ENCODE measurements at regions of chr17 and their contacts with region 1.

Region 1: GRCh38 chr17:45135192-45135977 is at the start of gene ACBD4:
- DNase-seq: peak; percentile 95 to 97 (median 96)
- ATAC-seq: peak; percentile 79 to 89 (median 84)
- H3K4me3 ChIP-seq: peak within 1 kb of the TSS; percentile 56 to 92 (median 68)
- H3K27ac ChIP-seq: peak within 1 kb of the TSS in 11 of 12 donors; percentile 66 to 91 (median 78)
- H3K4me1 ChIP-seq: peaks cover 0 to 40% (median 28%) of the 10 kb centered on the region in 12 donors
- H3K27me3 ChIP-seq: no peaks in the 10 kb centered on the region
- CTCF ChIP-seq: peak in 11 of 12 donors; percentile 99 to 100 (median 100)
- POLR2A ChIP-seq: peak in 1 of 2 donors; percentile 81
- total RNA-seq, gene ACBD4: 4.1 to 9.8 (median 6.3) TPM

Region 2: DNA sequence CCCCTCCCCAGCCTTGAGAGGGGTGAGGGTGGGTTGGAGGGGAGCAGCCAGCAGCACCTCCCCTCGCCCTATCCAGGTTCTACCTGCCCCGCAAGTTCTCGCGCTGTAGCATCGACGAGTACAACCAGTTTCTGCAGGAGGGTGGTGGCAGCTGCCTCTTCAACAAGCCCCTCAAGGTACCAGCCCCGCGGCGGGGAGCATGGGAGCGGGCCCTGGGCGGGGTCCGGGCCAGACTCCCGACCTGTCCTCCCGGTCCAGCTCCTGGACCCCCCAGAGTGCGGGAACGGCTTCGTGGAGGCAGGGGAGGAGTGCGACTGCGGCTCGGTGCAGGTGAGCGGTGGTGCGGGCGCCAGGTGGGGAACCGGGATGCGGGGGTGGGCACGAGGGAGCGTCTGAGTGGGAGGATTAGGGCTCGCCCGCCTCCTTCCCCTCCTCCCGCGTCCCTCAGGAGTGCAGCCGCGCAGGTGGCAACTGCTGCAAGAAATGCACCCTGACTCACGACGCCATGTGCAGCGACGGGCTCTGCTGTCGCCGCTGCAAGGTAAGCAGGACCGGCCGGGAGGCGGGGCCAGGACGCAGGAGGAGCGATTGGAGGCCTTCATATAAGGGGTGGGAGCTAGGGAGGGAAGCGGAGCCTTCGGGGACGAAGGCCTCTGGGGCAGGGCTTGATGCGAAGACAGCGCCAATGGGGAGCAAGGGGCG is 360.1 kb before region 1 on chr17:
- intact Hi-C with region 1: loop called in 2 of 10 experiments (anchors 10 kb)
- DNase-seq: peak in 4 of 5 donors; percentile 96 to 98 (median 96)
- ATAC-seq: peak; percentile 93 to 94 (median 94)
- H3K4me3 ChIP-seq: peak overlapping the region; percentile 31 to 74 (median 63)
- H3K27ac ChIP-seq: peak overlapping the region in 6 of 12 donors; percentile 7 to 82 (median 36)
- H3K4me1 ChIP-seq: peaks cover 0 to 30% (median 21%) of the 10 kb centered on the region in 12 donors
- H3K27me3 ChIP-seq: no peaks in the 10 kb centered on the region
- CTCF ChIP-seq: peak in 3 of 12 donors; percentile 3 to 38 (median 7)
- POLR2A ChIP-seq: no peak

Region 3: GRCh38 chr17:45021607-45022287 is 113.6 kb before region 1 on chr17:
- intact Hi-C with region 1: loop called in 1 of 10 experiments (anchors 2 kb)
- DNase-seq: peak; percentile 67 to 87 (median 73)
- ATAC-seq: peak in 3 of 4 donors; percentile 80 to 82 (median 82)
- H3K4me3 ChIP-seq: peak overlapping the region in 11 of 12 donors; percentile 29 to 68 (median 46)
- H3K27ac ChIP-seq: peak overlapping the region in 11 of 12 donors; percentile 1 to 79 (median 68)
- H3K4me1 ChIP-seq: peaks cover 0 to 46% (median 31%) of the 10 kb centered on the region in 12 donors
- H3K27me3 ChIP-seq: peaks cover 0 to 27% (median 0%) of the 10 kb centered on the region in 9 donors
- CTCF ChIP-seq: peak; percentile 67 to 98 (median 96)
- POLR2A ChIP-seq: peak in 1 of 2 donors; percentile 14

Region 4: GRCh38 chr17:45060797-45061605 is 74.4 kb before region 1 on chr17 and contains the start of gene NMT1:
- intact Hi-C with region 1: loop called in 3 of 10 experiments (anchors 2 to 10 kb)
- DNase-seq: peak; percentile 97 to 99 (median 98)
- ATAC-seq: peak; percentile 98
- H3K4me3 ChIP-seq: peak within 1 kb of the TSS; percentile 41 to 94 (median 78)
- H3K27ac ChIP-seq: peak within 1 kb of the TSS; percentile 68 to 95 (median 91)
- H3K4me1 ChIP-seq: peaks cover 2 to 60% (median 41%) of the 10 kb centered on the region in 12 donors
- H3K27me3 ChIP-seq: no peaks in the 10 kb centered on the region
- CTCF ChIP-seq: peak in 2 of 12 donors; percentile 15 to 24
- POLR2A ChIP-seq: peak; percentile 17 to 83
- total RNA-seq, gene NMT1: 61.0 to 114 (median 70.8) TPM

Region 5: GRCh38 chr17:45110668-45111611 is 24.4 kb before region 1 on chr17:
- intact Hi-C with region 1: loop called in 1 of 10 experiments (anchors 2 kb)
- DNase-seq: peak in 4 of 5 donors; percentile 58 to 76 (median 72)
- ATAC-seq: peak; percentile 78 to 90 (median 80)
- H3K4me3 ChIP-seq: no peak overlapping the region
- H3K27ac ChIP-seq: peak overlapping the region; percentile 75 to 95 (median 88)
- H3K4me1 ChIP-seq: peaks cover 0 to 67% (median 29%) of the 10 kb centered on the region in 12 donors
- H3K27me3 ChIP-seq: no peaks in the 10 kb centered on the region
- CTCF ChIP-seq: peak in 2 of 12 donors; percentile 13 to 20
- POLR2A ChIP-seq: no peak

Region 6: DNA sequence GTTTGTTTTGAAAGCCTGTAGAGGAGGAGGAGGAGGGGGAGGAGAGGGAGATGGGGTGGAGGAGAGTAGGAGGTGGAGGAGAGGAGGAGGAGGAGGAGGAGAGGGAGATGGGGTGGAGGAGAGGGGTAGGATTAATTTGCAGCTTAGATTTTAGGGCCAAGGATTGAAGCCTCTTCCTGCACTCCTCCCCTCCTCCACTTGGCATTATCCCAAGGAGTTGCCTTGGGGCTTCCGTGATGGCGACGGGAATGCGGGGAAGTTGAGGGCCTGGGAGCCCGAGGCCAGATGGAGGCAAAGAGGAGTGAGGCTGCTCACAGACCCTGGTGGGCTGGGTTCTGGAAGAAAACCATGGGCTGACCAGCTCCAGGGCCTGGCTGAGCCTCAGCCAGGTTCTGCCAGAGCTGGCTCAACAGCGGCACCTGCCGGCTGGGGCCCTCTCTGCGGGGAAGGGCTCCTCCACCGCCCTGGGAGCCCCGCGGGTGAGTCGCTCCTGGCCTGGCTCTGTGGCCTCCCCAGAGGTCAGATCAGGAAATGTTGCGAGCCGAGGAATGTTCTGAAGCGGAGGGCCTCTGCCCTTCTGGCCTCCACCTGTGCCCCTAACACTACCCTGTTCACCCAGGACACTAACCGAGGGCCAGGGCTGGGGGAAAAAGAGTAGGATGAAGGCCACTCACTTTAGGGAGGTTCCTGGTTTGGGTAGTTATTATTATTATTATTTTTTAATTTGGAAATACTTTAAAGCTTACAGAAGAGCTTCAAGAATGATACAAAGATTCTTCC is 62.4 kb after region 1 on chr17:
- intact Hi-C with region 1: loop called (anchors 1 to 2 kb)
- DNase-seq: peak; percentile 88 to 97 (median 93)
- ATAC-seq: peak; percentile 96 to 99 (median 96)
- H3K4me3 ChIP-seq: peak overlapping the region in 1 of 12 donors; percentile 21
- H3K27ac ChIP-seq: peak overlapping the region in 10 of 12 donors; percentile 32 to 74 (median 53)
- H3K4me1 ChIP-seq: peaks cover 0 to 18% (median 6%) of the 10 kb centered on the region in 12 donors
- H3K27me3 ChIP-seq: no peaks in the 10 kb centered on the region
- CTCF ChIP-seq: peak; percentile 97 to 100 (median 99)
- POLR2A ChIP-seq: no peak

Region 7: GRCh38 chr17:45394913-45395568 is 259.7 kb after region 1 on chr17:
- intact Hi-C with region 1: loop called in 1 of 10 experiments (anchors 10 kb)
- DNase-seq: peak; percentile 71 to 83 (median 77)
- ATAC-seq: peak; percentile 29 to 71 (median 63)
- H3K4me3 ChIP-seq: peak overlapping the region in 10 of 12 donors; percentile 2 to 42 (median 30)
- H3K27ac ChIP-seq: no peak overlapping the region
- H3K4me1 ChIP-seq: peaks cover 0 to 19% (median 4%) of the 10 kb centered on the region in 12 donors
- H3K27me3 ChIP-seq: no peaks in the 10 kb centered on the region
- CTCF ChIP-seq: peak; percentile 61 to 82 (median 72)
- POLR2A ChIP-seq: no peak